CD4-positive, alpha-beta memory T cell (primary cell): ENCODE measurements at regions of chr10 and their contacts with region 1.

Region 1: DNA sequence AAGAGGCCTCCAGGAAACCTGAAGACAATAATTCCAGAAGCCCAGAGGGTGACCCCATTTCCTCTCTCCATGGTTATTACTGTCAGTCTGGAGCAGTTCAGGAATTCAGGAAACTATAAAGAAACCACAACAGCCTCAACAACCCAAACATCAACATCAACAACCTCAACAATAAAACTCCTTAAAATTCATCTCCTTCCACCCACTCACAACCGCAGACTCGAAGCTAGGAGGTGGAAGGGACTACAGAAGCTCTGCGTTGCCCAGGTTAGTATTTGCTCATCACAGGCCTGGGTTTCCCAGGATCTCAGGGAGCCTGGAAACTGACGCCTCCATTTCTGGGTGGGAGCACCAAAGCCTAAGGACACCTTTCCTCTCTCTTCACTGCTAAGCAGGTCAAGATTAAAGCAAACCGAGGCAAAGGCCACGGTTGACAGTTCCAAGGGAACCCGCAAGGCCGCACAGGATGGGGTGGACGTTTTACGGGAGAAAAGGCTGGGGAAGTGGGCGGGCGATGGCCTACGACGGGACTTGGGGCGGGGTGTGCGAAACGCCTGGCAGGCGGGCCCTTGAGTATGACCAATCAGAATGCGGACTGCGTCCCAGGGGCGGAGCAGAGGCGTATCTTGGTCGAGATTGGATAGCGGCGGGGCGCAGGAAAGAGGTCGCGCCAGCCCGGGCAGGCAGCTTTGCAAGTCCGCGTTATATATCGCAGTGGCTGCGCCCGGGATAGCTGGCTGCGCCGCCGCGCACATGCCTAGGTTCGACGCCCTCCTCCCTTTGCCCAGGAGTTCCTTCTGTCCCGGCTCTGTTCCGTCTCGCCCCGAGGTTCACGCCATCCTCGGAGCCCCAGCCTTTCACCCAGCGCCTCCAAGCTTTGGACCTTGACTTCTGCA is at the start of gene ELOVL3:
- DNase-seq: peak; percentile 81 to 90 (median 84)
- H3K4me3 ChIP-seq: peak within 1 kb of the TSS in 1 of 2 donors; percentile 31
- H3K4me3 Mint-ChIP-seq: peak within 1 kb of the TSS; percentile 67 to 86 (median 80)
- H3K27ac ChIP-seq: peak within 1 kb of the TSS; percentile 7
- H3K27ac Mint-ChIP-seq: peak within 1 kb of the TSS; percentile 31 to 89 (median 52)
- H3K4me1 ChIP-seq: peaks cover 18% of the 10 kb centered on the region
- H3K4me1 Mint-ChIP-seq: peaks cover 6 to 26% (median 15%) of the 10 kb centered on the region in 4 donors
- H3K27me3 ChIP-seq: peaks cover 9% of the 10 kb centered on the region
- H3K27me3 Mint-ChIP-seq: peaks cover 22 to 27% of the 10 kb centered on the region in 2 donors
- total RNA-seq, gene ELOVL3: not detected

Region 2: DNA sequence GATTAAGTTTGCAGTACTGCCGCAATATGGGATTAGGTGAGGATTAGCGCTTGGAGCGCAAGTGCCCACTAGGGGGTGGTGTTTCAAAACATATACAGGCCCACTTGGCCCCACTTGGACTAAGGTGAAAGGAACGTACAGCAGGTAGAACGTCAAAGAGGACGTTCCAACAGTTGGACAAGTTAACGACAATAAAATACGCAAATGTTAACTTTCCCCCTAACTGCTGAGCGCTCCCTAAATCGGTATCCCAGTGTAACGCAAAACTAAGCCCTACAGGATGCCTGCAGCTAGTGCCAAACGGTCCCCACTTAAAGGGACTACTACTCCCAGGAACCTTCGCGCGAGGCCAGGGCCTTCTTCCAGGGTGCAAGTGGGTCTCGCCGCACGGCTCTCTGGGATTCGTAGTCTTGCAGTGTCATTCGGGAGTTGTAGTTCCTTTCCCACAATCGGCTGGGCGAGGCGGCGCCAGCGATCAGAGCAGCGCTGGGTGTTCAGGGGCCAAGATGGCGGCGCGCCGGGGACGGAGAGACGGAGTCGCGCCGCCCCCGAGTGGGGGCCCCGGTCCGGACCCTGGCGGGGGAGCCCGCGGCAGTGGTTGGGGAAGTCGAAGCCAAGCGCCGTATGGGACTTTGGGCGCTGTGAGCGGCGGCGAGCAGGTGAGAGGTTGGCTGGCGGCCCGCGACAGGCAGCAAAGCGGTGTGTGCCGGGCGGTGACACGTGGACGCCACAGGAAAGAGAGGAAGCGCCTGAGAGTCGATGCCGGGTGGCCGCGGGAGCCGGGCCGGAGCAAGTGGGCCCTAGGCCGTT is 93.1 kb before region 1 on chr10 and contains the start of gene PPRC1:
- CTCF ChIA-PET with region 1: interaction called, 5 read pairs
- POLR2A ChIA-PET with region 1: no interaction called
- intact Hi-C with region 1: loop called (anchors 5 kb)
- DNase-seq: peak; percentile 97 to 99 (median 97)
- H3K4me3 ChIP-seq: peak within 1 kb of the TSS; percentile 55 to 61
- H3K4me3 Mint-ChIP-seq: peak within 1 kb of the TSS; percentile 92 to 99 (median 96)
- H3K27ac ChIP-seq: peak within 1 kb of the TSS; percentile 88
- H3K27ac Mint-ChIP-seq: peak within 1 kb of the TSS; percentile 93 to 99 (median 96)
- H3K4me1 ChIP-seq: peaks cover 38% of the 10 kb centered on the region
- H3K4me1 Mint-ChIP-seq: peaks cover 27 to 50% (median 38%) of the 10 kb centered on the region in 4 donors
- H3K27me3 ChIP-seq: no peaks in the 10 kb centered on the region
- H3K27me3 Mint-ChIP-seq: no peaks in the 10 kb centered on the region
- total RNA-seq, gene PPRC1: 38.9 to 39.8 TPM

Region 3: DNA sequence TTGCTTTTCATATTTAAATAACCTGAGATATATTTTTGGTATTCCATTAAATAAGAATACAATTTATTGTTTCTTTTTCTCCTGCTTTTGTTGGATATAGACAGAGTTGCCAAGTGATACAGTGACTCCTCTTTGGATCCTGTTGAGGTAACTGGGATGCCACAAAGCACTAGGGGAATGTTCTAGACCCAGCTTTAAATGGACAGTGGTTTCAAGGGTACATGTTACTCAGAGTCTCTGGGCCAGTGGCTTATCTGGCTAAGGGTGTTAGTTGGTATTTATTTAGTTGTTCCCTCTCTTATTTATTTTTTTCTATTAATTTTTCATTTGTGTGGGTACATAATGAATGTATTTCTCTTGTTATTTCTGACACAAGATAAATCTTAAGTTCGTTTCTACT is 28.5 kb after region 1 on chr10:
- CTCF ChIA-PET with region 1: interaction called, 46 read pairs
- POLR2A ChIA-PET with region 1: interaction called, 22 read pairs
- intact Hi-C with region 1: no loop called
- DNase-seq: no peak
- H3K4me3 ChIP-seq: no peak overlapping the region
- H3K4me3 Mint-ChIP-seq: no peak overlapping the region
- H3K27ac ChIP-seq: no peak overlapping the region
- H3K27ac Mint-ChIP-seq: no peak overlapping the region
- H3K4me1 ChIP-seq: peaks cover 9% of the 10 kb centered on the region
- H3K4me1 Mint-ChIP-seq: peaks cover 12 to 24% (median 13%) of the 10 kb centered on the region in 4 donors
- H3K27me3 ChIP-seq: no peaks in the 10 kb centered on the region
- H3K27me3 Mint-ChIP-seq: no peaks in the 10 kb centered on the region

Region 4: GRCh38 chr10:102280397-102281101 is 54.7 kb after region 1 on chr10:
- CTCF ChIA-PET with region 1: no interaction called
- POLR2A ChIA-PET with region 1: no interaction called
- intact Hi-C with region 1: no loop called
- DNase-seq: no peak
- H3K4me3 ChIP-seq: no peak overlapping the region
- H3K4me3 Mint-ChIP-seq: peak overlapping the region in 3 of 8 donors; percentile 29 to 69 (median 51)
- H3K27ac ChIP-seq: no peak overlapping the region
- H3K27ac Mint-ChIP-seq: peak overlapping the region in 5 of 7 donors; percentile 42 to 93 (median 60)
- H3K4me1 ChIP-seq: peaks cover 47% of the 10 kb centered on the region
- H3K4me1 Mint-ChIP-seq: peaks cover 44 to 60% (median 51%) of the 10 kb centered on the region in 4 donors
- H3K27me3 ChIP-seq: no peaks in the 10 kb centered on the region
- H3K27me3 Mint-ChIP-seq: no peaks in the 10 kb centered on the region

Region 5: GRCh38 chr10:102322914-102323313 is 97.0 kb after region 1 on chr10:
- CTCF ChIA-PET with region 1: interaction called, 21 read pairs
- POLR2A ChIA-PET with region 1: no interaction called
- intact Hi-C with region 1: no loop called
- DNase-seq: peak; percentile 31 to 73 (median 46)
- H3K4me3 ChIP-seq: no peak overlapping the region
- H3K4me3 Mint-ChIP-seq: peak overlapping the region in 3 of 8 donors; percentile 12 to 52 (median 23)
- H3K27ac ChIP-seq: no peak overlapping the region
- H3K27ac Mint-ChIP-seq: peak overlapping the region in 5 of 7 donors; percentile 15 to 65 (median 61)
- H3K4me1 ChIP-seq: peaks cover 18% of the 10 kb centered on the region
- H3K4me1 Mint-ChIP-seq: peaks cover 23 to 53% (median 32%) of the 10 kb centered on the region in 4 donors
- H3K27me3 ChIP-seq: no peaks in the 10 kb centered on the region
- H3K27me3 Mint-ChIP-seq: no peaks in the 10 kb centered on the region

Region 6: DNA sequence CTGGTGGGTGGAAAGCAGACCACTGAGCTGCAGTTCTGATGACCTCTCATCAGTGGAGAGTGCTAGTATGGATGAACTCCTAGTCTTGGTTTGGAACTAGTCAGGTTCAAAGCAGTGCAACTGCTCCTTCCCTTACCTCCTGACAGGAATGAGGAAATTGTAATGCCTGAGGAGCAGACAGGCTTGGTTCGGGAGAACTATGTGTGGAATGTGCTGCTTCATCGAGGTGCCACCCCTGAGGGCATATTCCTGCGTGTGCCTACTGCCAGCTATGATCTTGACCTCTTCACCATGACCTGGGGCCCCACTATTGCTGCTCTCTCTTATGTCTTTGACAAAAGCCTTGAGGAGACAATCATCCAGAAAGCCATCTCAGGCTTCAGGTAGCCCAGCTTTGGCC is 142.2 kb after region 1 on chr10:
- CTCF ChIA-PET with region 1: interaction called, 25 read pairs
- POLR2A ChIA-PET with region 1: no interaction called
- intact Hi-C with region 1: no loop called
- DNase-seq: no peak
- H3K4me3 ChIP-seq: no peak overlapping the region
- H3K4me3 Mint-ChIP-seq: no peak overlapping the region
- H3K27ac ChIP-seq: no peak overlapping the region
- H3K27ac Mint-ChIP-seq: peak overlapping the region in 3 of 7 donors; percentile 10 to 60 (median 35)
- H3K4me1 ChIP-seq: no peaks in the 10 kb centered on the region
- H3K4me1 Mint-ChIP-seq: no peaks in the 10 kb centered on the region
- H3K27me3 ChIP-seq: no peaks in the 10 kb centered on the region
- H3K27me3 Mint-ChIP-seq: no peaks in the 10 kb centered on the region

Region 7: GRCh38 chr10:102476466-102477141 is 250.7 kb after region 1 on chr10:
- CTCF ChIA-PET with region 1: interaction called, 40 read pairs
- POLR2A ChIA-PET with region 1: interaction called, 6 read pairs
- intact Hi-C with region 1: loop called (anchors 1 kb)
- DNase-seq: no peak
- H3K4me3 ChIP-seq: no peak overlapping the region
- H3K4me3 Mint-ChIP-seq: no peak overlapping the region
- H3K27ac ChIP-seq: no peak overlapping the region
- H3K27ac Mint-ChIP-seq: peak overlapping the region in 6 of 7 donors; percentile 18 to 86 (median 59)
- H3K4me1 ChIP-seq: peaks cover 20% of the 10 kb centered on the region
- H3K4me1 Mint-ChIP-seq: peaks cover 11 to 28% (median 17%) of the 10 kb centered on the region in 4 donors
- H3K27me3 ChIP-seq: no peaks in the 10 kb centered on the region
- H3K27me3 Mint-ChIP-seq: no peaks in the 10 kb centered on the region